Activated B cell treated with CpG ODN at 0.5 μM for 24 hours (primary cell): ENCODE measurements at regions of chr12 and their contacts with region 1.

Region 1: DNA sequence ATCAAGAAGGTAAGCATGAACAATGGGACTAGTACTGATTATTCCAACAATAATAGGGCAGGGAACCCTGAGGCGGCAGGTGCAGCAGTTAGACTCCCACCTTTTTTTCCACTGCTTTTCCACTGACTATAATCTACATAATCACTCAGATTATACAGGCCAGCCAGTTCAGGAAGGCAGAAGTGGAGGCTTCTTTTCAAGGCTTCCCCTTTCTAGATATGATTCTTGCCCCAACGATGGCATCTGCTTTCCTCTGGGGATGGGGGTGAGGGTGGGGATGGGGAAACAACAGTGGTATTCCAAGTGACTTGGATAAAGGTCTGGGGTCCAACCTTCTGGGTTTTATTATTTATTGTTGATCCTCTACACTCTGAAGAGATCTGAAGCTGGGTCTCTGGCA is 331 bp downstream of the NCKAP1L start:
- DNase-seq: no peak
- ATAC-seq: peak; percentile 4
- H3K4me3 Mint-ChIP-seq: peak overlapping the region; percentile 98
- H3K27ac Mint-ChIP-seq: peak overlapping the region; percentile 97
- H3K4me1 Mint-ChIP-seq: peaks cover 49% of the 10 kb centered on the region
- H3K27me3 Mint-ChIP-seq: no peaks in the 10 kb centered on the region
- CTCF ChIP-seq: no peak

Region 2: DNA sequence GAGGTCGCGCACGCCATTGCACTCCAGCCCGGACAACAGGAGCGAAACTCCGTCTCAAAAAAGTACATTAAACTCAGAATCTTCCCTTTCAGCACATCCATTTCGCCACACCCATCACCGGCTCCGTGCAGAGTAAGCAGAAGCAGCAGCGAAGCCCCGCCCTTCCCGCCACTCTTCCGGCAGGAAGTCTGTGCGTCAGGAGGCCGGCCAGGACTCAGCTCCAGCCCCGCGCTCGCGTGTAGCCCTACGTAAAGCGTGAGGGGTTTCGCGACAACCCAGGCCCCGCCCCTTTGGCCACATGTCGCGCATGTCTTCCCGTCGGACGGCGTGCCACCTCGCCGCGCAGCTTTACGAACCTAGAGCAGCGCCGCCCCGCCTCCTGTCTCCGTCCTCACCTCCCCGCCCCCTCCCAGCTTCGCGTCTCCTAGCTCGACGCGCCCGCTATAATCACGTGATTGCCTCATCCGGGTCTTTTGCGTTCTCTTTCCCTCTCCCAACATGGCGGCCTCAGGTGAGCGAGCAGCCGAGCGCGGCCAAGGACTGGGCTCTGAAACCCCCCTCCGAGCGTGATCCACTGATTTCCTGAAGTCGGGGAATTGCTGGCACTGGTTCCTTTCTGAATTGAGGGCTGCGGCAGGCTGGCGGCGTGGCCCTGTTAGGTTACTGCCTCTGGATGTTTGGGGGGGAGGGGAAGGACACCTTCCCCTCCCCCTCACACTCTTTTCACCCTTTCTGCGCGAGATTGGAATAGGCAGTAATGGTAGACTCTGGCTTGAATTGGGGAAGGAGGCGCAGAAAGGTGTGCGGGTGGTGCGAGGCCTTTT is 1491.7 kb before region 1 on chr12 and contains the start of gene EIF4B:
- CTCF ChIA-PET with region 1: no interaction called
- POLR2A ChIA-PET with region 1: interaction called, 5 read pairs
- intact Hi-C with region 1: loop called (anchors 5 kb)
- DNase-seq: peak; percentile 97
- ATAC-seq: peak; percentile 90
- H3K4me3 Mint-ChIP-seq: peak within 1 kb of the TSS; percentile 98
- H3K27ac Mint-ChIP-seq: peak within 1 kb of the TSS; percentile 98
- H3K4me1 Mint-ChIP-seq: peaks cover 51% of the 10 kb centered on the region
- H3K27me3 Mint-ChIP-seq: peaks cover 1% of the 10 kb centered on the region
- CTCF ChIP-seq: no peak
- total RNA-seq, gene EIF4B: 726 and 733 TPM in 2 replicates

Region 3: DNA sequence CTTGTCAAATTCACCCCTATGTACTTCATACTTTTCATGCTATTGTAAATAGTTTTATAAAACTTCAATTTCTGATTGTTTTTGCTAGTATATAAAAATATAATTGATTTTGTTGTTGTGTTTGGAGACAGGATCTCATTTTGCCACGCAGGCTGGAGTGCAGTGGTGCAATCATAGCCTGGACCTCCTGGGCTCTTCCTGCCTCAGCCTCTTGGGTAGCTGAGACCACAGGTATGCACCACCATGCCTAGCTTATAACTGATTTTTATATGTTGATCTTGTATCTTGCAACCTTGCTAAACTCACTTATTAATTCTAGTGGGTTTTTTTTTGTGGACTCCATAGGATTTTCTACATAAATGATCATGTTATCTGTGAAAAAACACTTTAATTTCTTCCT is 845.5 kb before region 1 on chr12:
- CTCF ChIA-PET with region 1: no interaction called
- POLR2A ChIA-PET with region 1: no interaction called
- intact Hi-C with region 1: no loop called
- DNase-seq: no peak
- ATAC-seq: no peak
- H3K4me3 Mint-ChIP-seq: no peak overlapping the region
- H3K27ac Mint-ChIP-seq: no peak overlapping the region
- H3K4me1 Mint-ChIP-seq: no peaks in the 10 kb centered on the region
- H3K27me3 Mint-ChIP-seq: no peaks in the 10 kb centered on the region
- CTCF ChIP-seq: no peak

Region 4: GRCh38 chr12:54463034-54463433 is 34.8 kb before region 1 on chr12:
- CTCF ChIA-PET with region 1: no interaction called
- POLR2A ChIA-PET with region 1: interaction called, 10 read pairs
- intact Hi-C with region 1: no loop called
- DNase-seq: no peak
- ATAC-seq: no peak
- H3K4me3 Mint-ChIP-seq: no peak overlapping the region
- H3K27ac Mint-ChIP-seq: no peak overlapping the region
- H3K4me1 Mint-ChIP-seq: no peaks in the 10 kb centered on the region
- H3K27me3 Mint-ChIP-seq: peaks cover 9% of the 10 kb centered on the region
- CTCF ChIP-seq: no peak

Region 5: DNA sequence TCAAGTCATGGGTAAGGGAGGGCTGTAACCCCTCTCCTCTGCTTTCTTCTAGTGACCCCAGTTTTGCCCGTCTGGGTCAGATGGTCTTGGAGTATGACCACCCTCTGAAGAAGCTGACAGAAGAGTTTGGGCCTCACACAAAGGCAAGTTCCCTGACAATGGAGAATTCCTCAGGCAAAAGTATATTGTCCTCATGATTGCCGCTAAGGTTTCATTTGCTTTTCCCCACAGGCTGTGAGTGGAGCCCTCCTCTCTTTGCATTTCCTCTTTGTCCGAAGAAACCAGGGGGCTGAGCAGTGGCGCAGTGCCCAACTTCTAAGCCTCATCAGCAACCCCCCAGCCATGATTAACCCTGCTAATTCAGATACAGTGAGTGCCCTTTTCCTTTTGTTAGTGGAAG is 11.7 kb after region 1 on chr12:
- CTCF ChIA-PET with region 1: no interaction called
- POLR2A ChIA-PET with region 1: no interaction called
- intact Hi-C with region 1: loop called (anchors 1 kb)
- DNase-seq: no peak
- ATAC-seq: no peak
- H3K4me3 Mint-ChIP-seq: no peak overlapping the region
- H3K27ac Mint-ChIP-seq: no peak overlapping the region
- H3K4me1 Mint-ChIP-seq: peaks cover 17% of the 10 kb centered on the region
- H3K27me3 Mint-ChIP-seq: no peaks in the 10 kb centered on the region
- CTCF ChIP-seq: no peak

Region 6: GRCh38 chr12:54549774-54550451 is 52.0 kb after region 1 on chr12:
- CTCF ChIA-PET with region 1: no interaction called
- POLR2A ChIA-PET with region 1: interaction called, 30 read pairs
- intact Hi-C with region 1: no loop called
- DNase-seq: peak; percentile 21
- ATAC-seq: peak; percentile 70
- H3K4me3 Mint-ChIP-seq: peak overlapping the region; percentile 85
- H3K27ac Mint-ChIP-seq: peak overlapping the region; percentile 38
- H3K4me1 Mint-ChIP-seq: peaks cover 21% of the 10 kb centered on the region
- H3K27me3 Mint-ChIP-seq: no peaks in the 10 kb centered on the region
- CTCF ChIP-seq: no peak

Region 7: GRCh38 chr12:54588110-54588889 is 90.4 kb after region 1 on chr12 and contains the start of gene PPP1R1A:
- CTCF ChIA-PET with region 1: no interaction called
- POLR2A ChIA-PET with region 1: no interaction called
- intact Hi-C with region 1: no loop called
- DNase-seq: no peak
- ATAC-seq: no peak
- H3K4me3 Mint-ChIP-seq: peak within 1 kb of the TSS; percentile 6
- H3K27ac Mint-ChIP-seq: no peak within 1 kb of the TSS
- H3K4me1 Mint-ChIP-seq: peaks cover 7% of the 10 kb centered on the region
- H3K27me3 Mint-ChIP-seq: peaks cover 72% of the 10 kb centered on the region
- CTCF ChIP-seq: no peak
- total RNA-seq, gene PPP1R1A: not detected in 2 replicates

Region 8: DNA sequence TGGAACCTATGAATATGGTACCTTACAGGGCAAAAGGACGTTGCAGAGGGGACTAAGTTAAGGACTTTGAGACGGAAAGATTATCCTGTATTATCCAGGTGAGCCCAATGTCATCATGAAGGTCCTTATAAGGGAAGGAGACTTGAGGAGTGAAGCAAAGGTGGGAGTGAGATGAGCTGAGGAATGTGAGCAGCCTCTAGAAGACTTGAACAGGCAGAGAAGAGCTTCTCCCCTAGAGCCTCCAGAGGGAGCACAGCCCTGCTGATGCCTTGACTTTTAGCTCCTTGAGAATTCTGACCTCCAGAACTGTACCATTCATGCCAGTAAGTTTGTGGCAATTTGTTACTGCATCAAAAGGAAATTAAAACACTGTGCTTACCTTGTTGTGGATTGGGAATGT is 192.1 kb after region 1 on chr12:
- CTCF ChIA-PET with region 1: no interaction called
- POLR2A ChIA-PET with region 1: no interaction called
- intact Hi-C with region 1: no loop called
- DNase-seq: no peak
- ATAC-seq: no peak
- H3K4me3 Mint-ChIP-seq: no peak overlapping the region
- H3K27ac Mint-ChIP-seq: no peak overlapping the region
- H3K4me1 Mint-ChIP-seq: no peaks in the 10 kb centered on the region
- H3K27me3 Mint-ChIP-seq: peaks cover 50% of the 10 kb centered on the region
- CTCF ChIP-seq: no peak

Region 9: GRCh38 chr12:54891717-54892554 is 394.1 kb after region 1 on chr12:
- CTCF ChIA-PET with region 1: no interaction called
- POLR2A ChIA-PET with region 1: no interaction called
- intact Hi-C with region 1: no loop called
- DNase-seq: no peak
- ATAC-seq: no peak
- H3K4me3 Mint-ChIP-seq: no peak overlapping the region
- H3K27ac Mint-ChIP-seq: no peak overlapping the region
- H3K4me1 Mint-ChIP-seq: no peaks in the 10 kb centered on the region
- H3K27me3 Mint-ChIP-seq: peaks cover 10% of the 10 kb centered on the region
- CTCF ChIP-seq: no peak